Sigmoid colon (tissue), 7 donors: ENCODE measurements at regions of chr1 and their contacts with region 1.

Region 1: DNA sequence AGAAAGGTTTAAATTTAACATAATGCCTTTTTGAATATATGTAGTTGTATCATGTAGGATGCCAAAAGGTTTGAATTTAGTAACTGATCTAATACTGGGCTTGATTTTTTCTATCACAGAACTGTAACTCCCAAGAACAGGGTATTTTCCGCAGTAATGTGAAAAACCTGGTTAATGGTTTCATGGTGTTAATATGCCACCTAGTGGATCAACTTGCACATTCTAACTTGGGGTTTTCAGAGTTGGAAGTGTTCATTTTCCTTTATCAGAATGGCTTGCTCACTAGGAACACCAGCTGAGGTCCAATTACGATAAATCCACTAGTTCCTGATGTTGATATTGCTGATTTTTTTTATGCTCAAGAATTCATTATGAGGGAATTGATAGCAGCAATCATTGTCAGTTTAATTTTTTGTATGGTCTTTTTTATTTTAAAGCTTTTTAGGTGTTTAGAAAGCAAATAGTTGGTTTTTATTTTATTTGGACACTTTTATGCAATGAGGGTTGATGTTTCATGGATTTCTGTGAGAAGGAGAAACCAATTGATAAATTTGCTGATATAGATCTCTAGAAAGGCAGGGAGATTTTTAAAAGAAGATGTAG is 157.2 kb downstream of the PLA2G4A start:
- DNase-seq: no peak
- H3K4me3 ChIP-seq: no peak overlapping the region
- H3K27ac ChIP-seq: peak overlapping the region in 3 of 4 donors; percentile 77 to 82 (median 81)
- H3K4me1 ChIP-seq: peaks cover 0 to 56% (median 43%) of the 10 kb centered on the region in 4 donors
- H3K27me3 ChIP-seq: no peaks in the 10 kb centered on the region
- CTCF ChIP-seq: peak; percentile 57 to 75 (median 68)
- EP300 ChIP-seq: no peak
- POLR2A ChIP-seq: no peak

Region 2: GRCh38 chr1:186482661-186483255 is 503.2 kb before region 1 on chr1:
- intact Hi-C with region 1: loop called (anchors 2 kb)
- DNase-seq: peak; percentile 67
- H3K4me3 ChIP-seq: no peak overlapping the region
- H3K27ac ChIP-seq: no peak overlapping the region
- H3K4me1 ChIP-seq: no peaks in the 10 kb centered on the region
- H3K27me3 ChIP-seq: no peaks in the 10 kb centered on the region
- CTCF ChIP-seq: peak; percentile 14 to 81 (median 56)
- EP300 ChIP-seq: no peak
- POLR2A ChIP-seq: no peak

Region 3: DNA sequence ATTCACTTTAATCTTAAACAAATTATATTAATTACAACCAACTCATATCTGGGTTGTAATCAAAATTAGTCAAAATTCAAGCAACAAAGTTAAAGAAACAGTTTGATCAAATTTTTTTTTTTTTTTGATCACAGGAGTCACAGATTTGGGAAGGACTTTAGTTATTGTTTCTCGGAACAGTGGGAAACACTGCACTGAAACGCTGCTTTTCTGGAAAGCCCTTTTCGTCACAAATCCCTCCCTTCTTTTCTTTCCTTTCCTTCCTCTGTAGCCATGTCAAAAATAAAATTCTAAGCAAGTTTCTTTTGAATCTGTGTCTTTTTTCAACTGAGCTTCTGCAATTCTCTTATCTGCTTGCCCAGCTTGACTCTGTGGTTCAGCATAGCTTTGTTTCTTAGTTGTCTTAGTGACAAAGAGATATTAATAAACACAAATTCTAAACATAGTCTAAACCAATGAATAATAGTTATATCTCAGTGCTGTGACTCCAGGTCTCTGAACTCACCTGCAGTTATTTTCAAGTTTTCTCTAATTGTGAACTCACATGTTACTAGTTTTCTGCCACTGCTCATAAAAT is 359.5 kb before region 1 on chr1:
- intact Hi-C with region 1: loop called (anchors 5 kb)
- DNase-seq: no peak
- H3K4me3 ChIP-seq: peak overlapping the region in 2 of 4 donors; percentile 11 to 26
- H3K27ac ChIP-seq: peak overlapping the region; percentile 6 to 84 (median 76)
- H3K4me1 ChIP-seq: peaks cover 0 to 45% (median 30%) of the 10 kb centered on the region in 4 donors
- H3K27me3 ChIP-seq: no peaks in the 10 kb centered on the region
- CTCF ChIP-seq: no peak
- EP300 ChIP-seq: no peak
- POLR2A ChIP-seq: no peak

Region 4: DNA sequence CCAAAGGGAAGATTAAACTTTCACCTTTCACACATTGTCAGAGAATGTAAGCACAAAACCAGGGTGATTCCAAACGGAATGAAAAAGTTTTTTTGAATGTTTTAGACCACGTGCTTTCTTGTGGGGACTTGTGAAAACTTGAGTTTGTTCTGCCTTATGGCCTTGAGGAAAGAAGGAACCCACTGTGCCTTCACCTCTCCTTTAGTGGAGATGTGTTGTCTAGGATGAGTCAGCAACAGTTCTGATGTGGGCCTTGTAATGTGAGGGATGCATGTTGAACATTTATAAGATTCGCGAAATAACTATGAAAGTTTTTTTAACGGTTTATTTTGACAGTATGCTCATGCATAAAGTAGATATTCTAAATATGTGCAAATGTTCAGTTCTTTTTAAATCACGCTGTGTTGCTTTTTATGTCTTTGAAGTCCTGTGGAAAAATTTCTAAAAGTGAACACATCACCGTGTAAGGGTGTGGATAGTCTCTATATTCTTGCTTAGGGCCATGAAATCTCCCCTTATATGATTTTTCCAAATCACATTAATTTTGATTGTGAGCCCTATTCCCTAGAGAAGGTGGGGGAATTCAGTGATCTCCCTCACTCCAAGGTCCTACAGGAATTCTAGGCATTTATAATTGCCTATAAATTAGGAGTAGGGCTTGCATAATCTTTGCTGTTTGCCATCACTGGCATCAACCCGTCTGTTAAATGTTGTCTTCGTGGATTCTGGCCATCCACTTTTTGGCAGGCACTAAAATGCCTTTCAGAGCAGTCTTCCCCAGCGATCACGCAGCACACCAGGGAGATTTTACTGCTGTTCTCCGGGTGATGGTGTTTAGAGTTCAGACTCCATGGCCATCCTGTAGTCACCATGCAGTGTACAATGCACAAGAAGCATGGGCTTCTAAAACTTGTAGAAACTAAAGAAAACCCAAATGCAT is 109.8 kb before region 1 on chr1:
- intact Hi-C with region 1: loop called (anchors 5 kb)
- DNase-seq: peak; percentile 86
- H3K4me3 ChIP-seq: no peak overlapping the region
- H3K27ac ChIP-seq: peak overlapping the region in 3 of 4 donors; percentile 76 to 81 (median 81)
- H3K4me1 ChIP-seq: peaks cover 0 to 90% (median 56%) of the 10 kb centered on the region in 4 donors
- H3K27me3 ChIP-seq: no peaks in the 10 kb centered on the region
- CTCF ChIP-seq: no peak
- EP300 ChIP-seq: peak in 2 of 4 donors; percentile 32 to 63
- POLR2A ChIP-seq: no peak

Region 5: DNA sequence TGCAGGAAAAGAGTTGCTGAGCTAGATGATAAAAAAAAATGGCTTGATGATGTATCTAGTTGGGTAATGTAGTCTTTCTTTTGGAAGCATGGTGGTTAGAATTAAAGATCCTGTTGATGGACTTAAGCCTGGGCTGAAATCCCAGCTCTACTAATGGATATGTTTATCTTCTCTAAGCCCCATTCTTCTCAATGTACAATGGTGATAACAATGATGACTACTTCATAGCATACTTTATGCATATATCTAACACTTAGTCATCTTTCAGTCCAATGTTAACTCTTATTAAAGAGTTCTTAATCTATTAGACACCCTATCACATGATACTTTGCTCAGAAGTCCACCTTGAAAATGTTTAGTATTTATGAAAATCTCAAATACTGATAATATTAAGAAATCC is 32.3 kb after region 1 on chr1:
- intact Hi-C with region 1: no loop called
- DNase-seq: no peak
- H3K4me3 ChIP-seq: no peak overlapping the region
- H3K27ac ChIP-seq: no peak overlapping the region
- H3K4me1 ChIP-seq: no peaks in the 10 kb centered on the region
- H3K27me3 ChIP-seq: no peaks in the 10 kb centered on the region
- CTCF ChIP-seq: no peak
- EP300 ChIP-seq: no peak
- POLR2A ChIP-seq: no peak

Region 6: GRCh38 chr1:187185396-187185795 is 199.4 kb after region 1 on chr1:
- intact Hi-C with region 1: no loop called
- DNase-seq: no peak
- H3K4me3 ChIP-seq: no peak overlapping the region
- H3K27ac ChIP-seq: no peak overlapping the region
- H3K4me1 ChIP-seq: no peaks in the 10 kb centered on the region
- H3K27me3 ChIP-seq: no peaks in the 10 kb centered on the region
- CTCF ChIP-seq: no peak
- EP300 ChIP-seq: no peak
- POLR2A ChIP-seq: no peak